ENCODE measurements at regions of chr6 and their contacts with region 1.

Region 1: DNA sequence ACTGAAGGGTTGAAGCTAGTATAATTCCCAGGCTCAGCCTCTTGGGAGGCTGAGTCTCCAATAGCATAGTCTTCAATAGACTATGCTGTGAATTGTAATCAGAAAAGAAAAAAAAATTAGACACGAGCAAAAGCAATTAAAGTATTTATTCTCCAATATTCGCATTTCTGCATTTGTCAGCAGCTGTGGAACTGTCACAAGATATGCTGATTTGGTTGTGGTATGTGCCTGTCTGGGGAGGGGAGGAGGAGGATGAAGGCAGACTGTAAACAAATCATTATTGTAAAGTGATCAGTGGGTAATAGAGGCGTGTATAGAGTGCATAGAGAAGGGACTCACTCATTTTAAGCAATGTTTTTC is 10.1 kb upstream of the BICRAL start:
- DNase-seq: peak in 1 of 9 donors; percentile 63
- ATAC-seq: peak; percentile 35
- H3K4me3 ChIP-seq: peak overlapping the region; percentile 50
- H3K4me3 Mint-ChIP-seq: peak overlapping the region; percentile 67 to 91 (median 84)
- H3K27ac ChIP-seq: peak overlapping the region; percentile 91
- H3K27ac Mint-ChIP-seq: peak overlapping the region; percentile 99 to 100 (median 100)
- H3K4me1 ChIP-seq: peaks cover 67 to 72% of the 10 kb centered on the region in 2 donors
- H3K4me1 Mint-ChIP-seq: peaks cover 49 to 86% (median 75%) of the 10 kb centered on the region in 7 donors
- H3K27me3 ChIP-seq: no peaks in the 10 kb centered on the region
- H3K27me3 Mint-ChIP-seq: no peaks in the 10 kb centered on the region

Region 2: DNA sequence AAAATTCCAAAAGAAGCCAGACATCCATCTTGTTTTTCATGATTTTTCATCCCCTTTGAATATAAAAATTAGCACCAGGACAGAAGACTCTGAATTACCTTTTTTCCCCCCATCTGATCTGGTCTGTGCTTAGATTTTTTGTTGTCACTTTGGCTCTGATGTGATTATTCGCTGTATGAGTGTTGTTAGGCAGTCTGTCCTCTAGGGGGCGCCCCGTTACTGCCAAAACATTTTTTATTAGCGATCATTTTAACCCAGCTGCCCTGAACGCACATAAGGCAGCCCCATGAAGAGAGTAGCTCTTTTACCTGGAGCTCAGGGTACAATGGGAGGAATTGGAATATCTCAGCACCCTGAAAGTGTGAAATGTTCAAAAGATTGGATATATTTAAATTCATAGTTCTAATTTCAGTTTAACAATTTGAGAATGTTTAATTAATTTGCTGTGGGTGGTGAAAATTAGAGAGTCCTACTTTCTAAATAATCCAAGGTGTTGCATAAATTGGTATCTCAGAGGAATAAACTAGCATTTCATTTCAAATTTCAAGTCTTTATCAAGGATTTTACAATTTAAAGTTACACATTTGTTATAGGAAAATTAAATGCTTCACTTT is 110.1 kb before region 1 on chr6:
- CTCF ChIA-PET with region 1: no interaction called
- POLR2A ChIA-PET with region 1: interaction called, 5 read pairs
- intact Hi-C with region 1: loop called in 1 of 2 experiments (anchors 2 kb)
- DNase-seq: peak; percentile 73 to 89 (median 81)
- ATAC-seq: peak; percentile 99
- H3K4me3 ChIP-seq: no peak overlapping the region
- H3K4me3 Mint-ChIP-seq: no peak overlapping the region
- H3K27ac ChIP-seq: no peak overlapping the region
- H3K27ac Mint-ChIP-seq: peak overlapping the region in 8 of 9 donors; percentile 0 to 59 (median 26)
- H3K4me1 ChIP-seq: no peaks in the 10 kb centered on the region
- H3K4me1 Mint-ChIP-seq: peaks cover 0 to 6% (median 0%) of the 10 kb centered on the region in 7 donors
- H3K27me3 ChIP-seq: no peaks in the 10 kb centered on the region
- H3K27me3 Mint-ChIP-seq: no peaks in the 10 kb centered on the region

Region 3: GRCh38 chr6:42726485-42727086 is 45.1 kb before region 1 on chr6:
- CTCF ChIA-PET with region 1: interaction called, 8 read pairs
- POLR2A ChIA-PET with region 1: interaction called, 1,628 read pairs
- intact Hi-C with region 1: loop called in 1 of 2 experiments (anchors 1 kb)
- DNase-seq: peak; percentile 20 to 87 (median 80)
- ATAC-seq: peak; percentile 99
- H3K4me3 ChIP-seq: peak overlapping the region; percentile 84
- H3K4me3 Mint-ChIP-seq: peak overlapping the region; percentile 76 to 96 (median 90)
- H3K27ac ChIP-seq: peak overlapping the region; percentile 74
- H3K27ac Mint-ChIP-seq: peak overlapping the region; percentile 89 to 99 (median 98)
- H3K4me1 ChIP-seq: peaks cover 6 to 14% of the 10 kb centered on the region in 2 donors
- H3K4me1 Mint-ChIP-seq: peaks cover 9 to 25% (median 20%) of the 10 kb centered on the region in 7 donors
- H3K27me3 ChIP-seq: no peaks in the 10 kb centered on the region
- H3K27me3 Mint-ChIP-seq: peaks cover 0 to 1% (median 0%) of the 10 kb centered on the region in 5 donors

Region 4: DNA sequence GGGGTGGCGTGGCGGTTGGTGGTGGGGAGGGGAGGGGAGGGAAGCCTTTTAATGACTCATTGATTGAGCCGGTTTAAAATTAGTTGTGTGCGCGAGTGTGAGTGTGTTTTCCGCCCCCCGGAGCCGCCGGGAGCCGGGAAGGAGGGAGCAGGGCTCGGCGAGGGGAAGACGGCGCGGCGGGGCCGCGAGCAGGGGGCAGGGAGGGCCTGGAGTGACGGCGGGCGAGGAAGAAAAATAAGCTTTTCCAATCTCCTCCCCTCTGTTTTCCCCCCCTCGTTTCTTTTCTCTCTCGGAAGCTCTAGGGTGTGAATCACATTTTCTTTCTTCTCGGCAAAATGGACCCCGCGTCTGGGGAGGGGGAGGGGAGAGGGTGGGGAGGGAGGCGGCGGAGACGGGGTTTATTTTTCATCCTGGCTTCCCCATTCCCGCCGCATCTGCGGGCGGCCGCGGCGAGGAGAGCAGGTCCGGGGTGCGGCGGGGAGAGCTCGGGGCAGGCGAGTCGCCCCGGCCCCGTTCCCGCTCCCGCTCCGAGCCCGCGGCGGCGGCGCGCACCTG is 11.0 kb after region 1 on chr6:
- CTCF ChIA-PET with region 1: interaction called, 14 read pairs
- POLR2A ChIA-PET with region 1: interaction called, 478 read pairs
- intact Hi-C with region 1: loop called (anchors 1 kb)
- DNase-seq: peak in 8 of 9 donors; percentile 65 to 88 (median 82)
- ATAC-seq: peak; percentile 75
- H3K4me3 ChIP-seq: peak overlapping the region; percentile 89
- H3K4me3 Mint-ChIP-seq: peak overlapping the region in 8 of 10 donors; percentile 89 to 100 (median 98)
- H3K27ac ChIP-seq: peak overlapping the region; percentile 100
- H3K27ac Mint-ChIP-seq: peak overlapping the region in 5 of 9 donors; percentile 99 to 100 (median 100)
- H3K4me1 ChIP-seq: peaks cover 36 to 45% of the 10 kb centered on the region in 2 donors
- H3K4me1 Mint-ChIP-seq: peaks cover under 1 to 35% (median 30%) of the 10 kb centered on the region in 7 donors
- H3K27me3 ChIP-seq: no peaks in the 10 kb centered on the region
- H3K27me3 Mint-ChIP-seq: no peaks in the 10 kb centered on the region

Region 5: DNA sequence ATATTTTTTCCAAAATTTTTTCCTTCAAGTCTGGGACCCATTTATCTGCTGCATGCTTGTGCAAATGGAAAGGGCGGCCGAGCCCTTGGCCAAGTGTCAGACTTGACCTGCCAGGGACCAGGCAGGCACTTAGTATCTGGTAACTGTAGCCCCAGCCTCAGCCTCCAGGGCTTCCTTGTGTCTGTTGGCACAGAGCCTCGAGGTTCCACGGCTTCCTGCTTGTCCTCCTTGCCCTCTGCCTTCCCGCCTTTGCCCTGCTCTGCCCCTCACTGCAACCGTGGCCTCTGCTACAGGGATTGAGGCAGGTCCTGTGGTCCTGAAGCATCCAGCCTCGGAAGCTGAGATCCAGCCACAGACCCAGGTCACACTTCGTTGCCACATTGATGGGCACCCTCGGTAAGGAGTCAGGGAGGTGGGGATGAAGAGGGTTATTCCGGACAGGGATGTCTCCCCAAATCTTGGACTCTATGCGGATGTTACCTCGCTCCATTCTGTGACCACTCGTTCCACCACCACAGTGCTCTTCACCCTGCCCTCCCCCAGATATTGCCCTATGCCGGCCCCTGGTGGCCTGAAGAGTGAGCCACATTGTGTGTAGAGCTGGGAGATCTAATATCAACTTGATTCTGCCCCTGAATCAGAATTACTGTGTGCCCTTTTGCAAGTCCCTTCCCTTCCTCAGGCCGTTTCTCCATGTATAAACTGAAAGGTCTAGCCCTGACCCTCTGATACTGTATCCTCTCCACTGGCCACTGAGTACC is 357.9 kb after region 1 on chr6:
- CTCF ChIA-PET with region 1: no interaction called
- POLR2A ChIA-PET with region 1: no interaction called
- intact Hi-C with region 1: no loop called
- DNase-seq: peak in 1 of 9 donors; percentile 10
- ATAC-seq: peak; percentile 61
- H3K4me3 ChIP-seq: no peak overlapping the region
- H3K4me3 Mint-ChIP-seq: no peak overlapping the region
- H3K27ac ChIP-seq: no peak overlapping the region
- H3K27ac Mint-ChIP-seq: no peak overlapping the region
- H3K4me1 ChIP-seq: no peaks in the 10 kb centered on the region
- H3K4me1 Mint-ChIP-seq: no peaks in the 10 kb centered on the region
- H3K27me3 ChIP-seq: no peaks in the 10 kb centered on the region
- H3K27me3 Mint-ChIP-seq: no peaks in the 10 kb centered on the region

Region 6: DNA sequence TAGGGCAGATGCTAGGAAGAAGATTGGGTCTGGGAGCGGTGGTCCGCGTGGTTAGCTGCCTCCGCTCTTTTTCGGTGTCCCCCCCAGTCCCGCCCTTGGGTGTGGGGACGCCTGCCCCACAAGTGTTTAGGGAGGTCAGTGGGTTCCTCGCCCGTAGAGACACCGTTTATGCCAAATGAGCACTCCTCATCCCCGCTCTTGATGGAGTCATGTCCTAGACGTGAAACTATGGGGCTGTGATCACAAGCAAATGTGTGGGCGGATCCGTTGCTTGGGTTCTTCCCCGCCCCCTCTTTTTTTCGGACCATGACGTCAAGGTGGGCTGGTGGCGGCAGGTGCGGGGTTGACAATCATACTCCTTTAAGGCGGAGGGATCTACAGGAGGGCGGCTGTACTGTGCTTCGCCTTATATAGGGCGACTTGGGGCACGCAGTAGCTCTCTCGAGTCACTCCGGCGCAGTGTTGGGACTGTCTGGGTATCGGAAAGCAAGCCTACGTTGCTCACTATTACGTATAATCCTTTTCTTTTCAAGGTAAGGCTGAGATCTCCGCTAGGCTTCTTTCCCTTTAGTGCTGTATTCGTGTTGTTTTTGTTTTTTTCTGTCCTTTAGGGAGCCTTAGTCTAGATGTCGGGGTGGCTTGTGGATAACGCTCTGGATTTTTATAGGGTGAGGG is 1475.1 kb after region 1 on chr6 and contains the start of gene HSP90AB1:
- CTCF ChIA-PET with region 1: no interaction called
- POLR2A ChIA-PET with region 1: no interaction called
- intact Hi-C with region 1: loop called in 1 of 2 experiments (anchors 5 kb)
- DNase-seq: peak; percentile 78 to 98 (median 97)
- ATAC-seq: peak; percentile 90
- H3K4me3 ChIP-seq: peak within 1 kb of the TSS; percentile 99
- H3K4me3 Mint-ChIP-seq: peak within 1 kb of the TSS; percentile 94 to 99 (median 98)
- H3K27ac ChIP-seq: peak within 1 kb of the TSS; percentile 93
- H3K27ac Mint-ChIP-seq: peak within 1 kb of the TSS; percentile 96 to 100 (median 98)
- H3K4me1 ChIP-seq: peaks cover 15 to 19% of the 10 kb centered on the region in 2 donors
- H3K4me1 Mint-ChIP-seq: peaks cover 29 to 53% (median 44%) of the 10 kb centered on the region in 7 donors
- H3K27me3 ChIP-seq: no peaks in the 10 kb centered on the region
- H3K27me3 Mint-ChIP-seq: peaks cover 0 to 12% (median 0%) of the 10 kb centered on the region in 5 donors
- total RNA-seq, gene HSP90AB1: 345 to 750 (median 366) TPM

Measured in naive thymus-derived CD4-positive, alpha-beta T cell (primary cell).